AG04449 (cell line): ENCODE measurements at regions of chr3 and their contacts with region 1.

Region 1: DNA sequence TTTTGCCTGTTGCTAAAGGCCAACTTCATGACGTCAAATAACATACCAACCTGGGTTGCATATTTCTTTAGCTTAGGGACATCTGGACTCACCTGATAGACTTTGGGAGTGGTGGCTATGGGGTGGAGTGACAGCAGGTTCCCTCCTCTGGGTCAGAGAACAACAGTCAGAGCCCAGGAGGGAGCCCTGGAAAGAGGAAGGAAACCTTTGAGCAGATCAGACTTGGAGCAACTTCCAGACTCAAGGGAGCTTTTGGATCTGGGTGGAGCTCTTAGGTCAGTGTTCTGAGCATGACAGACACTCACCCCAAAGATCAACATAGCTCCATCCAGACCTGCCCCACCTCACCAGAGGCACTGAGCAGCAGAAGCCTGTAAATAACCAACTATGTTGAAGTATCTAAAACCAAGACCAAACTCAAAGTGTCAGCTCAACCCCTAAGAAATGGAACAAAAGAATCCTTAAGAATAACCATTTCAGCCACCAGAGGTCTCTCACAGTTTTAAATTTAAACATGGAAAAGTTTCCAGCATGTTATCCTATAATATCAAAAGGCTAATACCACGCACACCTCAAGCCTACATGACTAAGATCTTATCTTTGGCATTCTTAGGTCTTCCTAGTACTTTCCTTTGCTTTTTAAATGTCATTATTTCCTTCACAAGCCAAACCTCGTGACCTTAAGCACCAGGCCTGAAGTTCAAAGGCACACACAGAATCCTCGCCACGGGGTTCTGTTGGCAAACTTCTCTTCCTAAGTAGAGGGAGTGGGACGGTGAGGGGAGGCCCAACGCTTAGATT is 56.4 kb downstream of the UMPS start:
- DNase-seq: no peak
- H3K4me3 ChIP-seq: no peak overlapping the region
- CTCF ChIP-seq: no peak

Region 2: DNA sequence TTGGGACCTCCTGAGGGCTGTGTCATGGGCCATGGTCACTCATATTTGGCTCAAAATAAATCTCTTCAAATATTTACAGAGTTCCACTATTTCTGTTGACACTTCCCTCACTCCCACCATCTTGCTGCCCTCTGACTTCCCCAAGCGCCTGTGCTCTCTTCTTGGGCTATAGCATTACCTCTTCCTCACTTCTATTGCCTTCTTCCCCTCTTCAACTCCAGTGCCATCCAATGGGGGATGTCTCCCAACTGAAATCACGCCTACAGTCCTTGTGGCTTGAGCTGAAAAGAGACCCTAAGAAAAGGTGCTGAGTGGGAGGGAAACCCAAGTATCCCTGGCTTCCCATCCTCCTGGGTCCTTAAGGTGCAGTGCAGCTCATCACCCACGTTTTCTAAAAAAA is 34.6 kb before region 1 on chr3:
- CTCF ChIA-PET with region 1: no interaction called
- POLR2A ChIA-PET with region 1: no interaction called
- DNase-seq: no peak
- H3K4me3 ChIP-seq: no peak overlapping the region
- CTCF ChIP-seq: no peak

Region 3: DNA sequence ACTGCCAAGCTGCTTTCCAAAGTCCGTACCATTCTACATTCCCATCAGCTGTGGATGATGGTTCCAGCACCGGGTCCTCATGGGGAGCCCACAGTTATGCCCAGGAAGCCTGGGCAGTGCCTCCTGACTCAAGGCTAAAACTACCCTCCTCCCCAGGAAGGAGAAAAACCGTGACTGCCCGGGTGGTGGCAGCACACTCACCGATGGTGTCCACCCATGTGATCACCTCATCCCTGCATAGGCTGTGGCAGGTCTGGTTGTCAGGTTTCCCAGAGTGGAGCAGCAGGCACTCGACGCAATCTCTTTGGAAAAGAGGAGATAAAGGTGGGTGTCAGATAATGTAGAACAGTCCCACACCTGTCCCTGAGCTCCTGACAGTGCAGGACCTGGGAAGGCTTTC is 17.8 kb before region 1 on chr3:
- CTCF ChIA-PET with region 1: interaction called, 52 read pairs
- POLR2A ChIA-PET with region 1: interaction called, 6 read pairs
- DNase-seq: no peak
- H3K4me3 ChIP-seq: no peak overlapping the region
- CTCF ChIP-seq: peak; percentile 6

Region 4: GRCh38 chr3:124774327-124774718 is 12.3 kb before region 1 on chr3:
- CTCF ChIA-PET with region 1: interaction called, 24 read pairs
- POLR2A ChIA-PET with region 1: interaction called, 6 read pairs
- DNase-seq: no peak
- H3K4me3 ChIP-seq: no peak overlapping the region
- CTCF ChIP-seq: no peak

Region 5: GRCh38 chr3:124800511-124801258 is 14.0 kb after region 1 on chr3:
- CTCF ChIA-PET with region 1: interaction called, 12 read pairs
- POLR2A ChIA-PET with region 1: no interaction called
- DNase-seq: no peak
- H3K4me3 ChIP-seq: no peak overlapping the region
- CTCF ChIP-seq: no peak

Region 6: DNA sequence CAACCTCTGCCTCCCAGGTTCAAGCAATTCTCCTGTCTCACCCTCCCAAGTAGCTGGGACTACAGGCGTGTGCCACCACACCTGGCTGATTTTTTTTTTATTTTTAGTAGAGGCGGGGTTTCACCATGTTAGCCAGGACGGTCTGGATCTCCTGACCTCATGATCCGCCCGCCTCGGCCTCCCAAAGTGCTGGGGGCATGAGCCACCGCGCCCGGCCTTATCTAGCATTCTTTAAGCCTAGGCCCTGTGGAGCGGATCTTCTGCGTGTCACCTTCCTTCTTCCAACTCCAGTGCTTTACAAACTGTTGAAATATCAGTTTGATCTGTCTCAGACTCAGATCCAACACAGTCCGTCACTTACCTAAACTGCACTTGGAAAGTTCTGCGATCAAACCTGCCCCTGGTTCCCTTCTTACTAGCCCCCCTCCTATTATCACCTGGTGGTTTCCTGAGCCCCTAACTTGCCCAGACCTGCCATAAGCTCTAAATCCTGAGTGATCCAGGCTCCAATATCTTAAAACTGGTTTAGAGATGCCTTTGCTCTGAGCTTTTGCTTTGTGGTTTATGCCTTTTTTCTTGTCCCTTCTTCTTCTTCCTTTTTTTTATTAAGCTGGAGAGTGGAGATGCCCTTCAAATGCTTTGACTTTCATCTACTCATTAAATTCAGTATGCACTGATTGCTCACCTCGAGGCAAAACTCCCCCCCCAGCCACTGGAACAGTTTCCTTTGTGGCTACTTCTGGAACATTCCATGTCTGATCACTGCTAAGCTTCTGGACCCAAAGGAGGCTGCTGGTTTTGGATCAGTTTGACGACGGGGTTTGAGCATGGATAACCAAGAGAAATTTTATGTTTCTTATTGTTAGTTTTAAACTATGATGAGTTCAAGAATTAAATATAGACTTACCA is 103.9 kb after region 1 on chr3:
- CTCF ChIA-PET with region 1: interaction called, 25 read pairs
- POLR2A ChIA-PET with region 1: interaction called, 4 read pairs
- DNase-seq: no peak
- H3K4me3 ChIP-seq: no peak overlapping the region
- CTCF ChIP-seq: no peak

Region 7: DNA sequence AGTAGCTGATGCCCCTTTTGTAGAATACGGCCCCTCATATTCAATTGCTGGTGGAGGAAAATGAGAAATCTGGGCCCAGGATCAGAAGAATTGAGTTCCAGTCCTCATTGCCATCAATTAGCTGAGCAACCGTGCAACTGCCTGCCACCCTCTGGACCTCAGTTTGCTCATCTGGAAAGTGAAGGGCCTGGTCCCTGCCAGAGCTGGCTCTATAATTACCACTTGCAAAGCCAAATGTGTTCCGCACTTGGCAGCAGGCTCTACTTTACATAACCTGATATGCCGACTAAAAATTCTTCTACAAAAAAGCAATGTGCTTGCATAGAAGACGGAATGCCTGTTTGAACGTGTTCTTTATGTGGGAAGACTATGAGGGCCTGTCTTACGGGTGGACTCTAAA is 109.1 kb after region 1 on chr3:
- CTCF ChIA-PET with region 1: interaction called, 188 read pairs
- POLR2A ChIA-PET with region 1: no interaction called
- DNase-seq: no peak
- H3K4me3 ChIP-seq: no peak overlapping the region
- CTCF ChIP-seq: no peak